Naive thymus-derived CD4-positive, alpha-beta T cell (primary cell): ENCODE measurements at regions of chr2 and their contacts with region 1.

Region 1: GRCh38 chr2:134918526-134919340 is at the start of gene CCNT2:
- DNase-seq: peak; percentile 99 to 100 (median 100)
- ATAC-seq: peak; percentile 90
- H3K4me3 ChIP-seq: peak within 1 kb of the TSS; percentile 96
- H3K4me3 Mint-ChIP-seq: peak within 1 kb of the TSS; percentile 86 to 98 (median 93)
- H3K27ac ChIP-seq: peak within 1 kb of the TSS; percentile 97
- H3K27ac Mint-ChIP-seq: peak within 1 kb of the TSS; percentile 91 to 99 (median 96)
- H3K4me1 ChIP-seq: peaks cover 31 to 45% of the 10 kb centered on the region in 2 donors
- H3K4me1 Mint-ChIP-seq: peaks cover 18 to 71% (median 48%) of the 10 kb centered on the region in 7 donors
- H3K27me3 ChIP-seq: no peaks in the 10 kb centered on the region
- H3K27me3 Mint-ChIP-seq: peaks cover 0 to 14% (median 0%) of the 10 kb centered on the region in 5 donors
- total RNA-seq, gene CCNT2: 49.8 to 78.1 (median 67.9) TPM

Region 2: GRCh38 chr2:134594399-134594798 is 324.3 kb before region 1 on chr2:
- CTCF ChIA-PET with region 1: no interaction called
- POLR2A ChIA-PET with region 1: no interaction called
- intact Hi-C with region 1: no loop called
- DNase-seq: no peak
- ATAC-seq: no peak
- H3K4me3 ChIP-seq: no peak overlapping the region
- H3K4me3 Mint-ChIP-seq: no peak overlapping the region
- H3K27ac ChIP-seq: no peak overlapping the region
- H3K27ac Mint-ChIP-seq: no peak overlapping the region
- H3K4me1 ChIP-seq: no peaks in the 10 kb centered on the region
- H3K4me1 Mint-ChIP-seq: no peaks in the 10 kb centered on the region
- H3K27me3 ChIP-seq: peaks cover 0 to 4% of the 10 kb centered on the region in 2 donors
- H3K27me3 Mint-ChIP-seq: peaks cover 0 to 8% (median 0%) of the 10 kb centered on the region in 5 donors

Region 3: DNA sequence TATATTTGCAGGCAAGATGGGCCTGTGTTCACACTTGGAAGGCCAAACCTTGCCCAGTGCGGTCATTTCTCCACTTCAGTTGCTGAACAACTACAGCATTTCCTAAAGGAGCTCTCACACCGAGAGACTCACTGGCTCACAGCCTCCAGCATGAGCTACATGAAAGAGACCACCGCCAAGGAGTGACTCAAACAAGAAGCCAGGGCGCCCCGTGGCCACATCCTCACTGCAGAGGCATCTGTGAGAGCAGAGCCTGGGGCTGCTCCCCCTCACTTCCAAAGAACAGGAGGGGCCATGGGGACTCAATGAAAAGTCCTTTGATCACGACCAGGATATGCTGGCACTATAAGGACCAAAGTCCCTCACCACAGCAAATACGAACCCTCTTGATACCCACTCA is 249.9 kb before region 1 on chr2:
- CTCF ChIA-PET with region 1: no interaction called
- POLR2A ChIA-PET with region 1: interaction called, 14 read pairs
- intact Hi-C with region 1: loop called (anchors 1 kb)
- DNase-seq: peak; percentile 53 to 92 (median 88)
- ATAC-seq: peak; percentile 85
- H3K4me3 ChIP-seq: peak overlapping the region; percentile 4
- H3K4me3 Mint-ChIP-seq: peak overlapping the region; percentile 62 to 82 (median 68)
- H3K27ac ChIP-seq: no peak overlapping the region
- H3K27ac Mint-ChIP-seq: peak overlapping the region; percentile 74 to 96 (median 89)
- H3K4me1 ChIP-seq: peaks cover 54 to 61% of the 10 kb centered on the region in 2 donors
- H3K4me1 Mint-ChIP-seq: peaks cover 60 to 87% (median 72%) of the 10 kb centered on the region in 7 donors
- H3K27me3 ChIP-seq: no peaks in the 10 kb centered on the region
- H3K27me3 Mint-ChIP-seq: peaks cover 0 to 37% (median 4%) of the 10 kb centered on the region in 5 donors

Region 4: GRCh38 chr2:134949981-134950708 is 31.4 kb after region 1 on chr2:
- CTCF ChIA-PET with region 1: no interaction called
- POLR2A ChIA-PET with region 1: interaction called, 4 read pairs
- intact Hi-C with region 1: loop called in 1 of 2 experiments (anchors 2 kb)
- DNase-seq: peak in 1 of 9 donors; percentile 2
- ATAC-seq: peak; percentile 40
- H3K4me3 ChIP-seq: no peak overlapping the region
- H3K4me3 Mint-ChIP-seq: no peak overlapping the region
- H3K27ac ChIP-seq: no peak overlapping the region
- H3K27ac Mint-ChIP-seq: peak overlapping the region; percentile 10 to 78 (median 31)
- H3K4me1 ChIP-seq: peaks cover 0 to 8% of the 10 kb centered on the region in 2 donors
- H3K4me1 Mint-ChIP-seq: peaks cover 6 to 47% (median 40%) of the 10 kb centered on the region in 7 donors
- H3K27me3 ChIP-seq: no peaks in the 10 kb centered on the region
- H3K27me3 Mint-ChIP-seq: no peaks in the 10 kb centered on the region

Region 5: GRCh38 chr2:135113322-135113721 is 194.6 kb after region 1 on chr2:
- CTCF ChIA-PET with region 1: no interaction called
- POLR2A ChIA-PET with region 1: no interaction called
- intact Hi-C with region 1: no loop called
- DNase-seq: no peak
- ATAC-seq: no peak
- H3K4me3 ChIP-seq: no peak overlapping the region
- H3K4me3 Mint-ChIP-seq: no peak overlapping the region
- H3K27ac ChIP-seq: no peak overlapping the region
- H3K27ac Mint-ChIP-seq: no peak overlapping the region
- H3K4me1 ChIP-seq: no peaks in the 10 kb centered on the region
- H3K4me1 Mint-ChIP-seq: peaks cover 0 to 20% (median 14%) of the 10 kb centered on the region in 7 donors
- H3K27me3 ChIP-seq: no peaks in the 10 kb centered on the region
- H3K27me3 Mint-ChIP-seq: no peaks in the 10 kb centered on the region

Region 6: GRCh38 chr2:135741395-135742324 is 822.9 kb after region 1 on chr2 and contains the start of gene UBXN4:
- CTCF ChIA-PET with region 1: interaction called, 5 read pairs
- POLR2A ChIA-PET with region 1: interaction called, 3 read pairs
- intact Hi-C with region 1: loop called (anchors 1 kb)
- DNase-seq: peak; percentile 73 to 93 (median 88)
- ATAC-seq: peak; percentile 95
- H3K4me3 ChIP-seq: peak within 1 kb of the TSS; percentile 88
- H3K4me3 Mint-ChIP-seq: peak within 1 kb of the TSS; percentile 92 to 98 (median 95)
- H3K27ac ChIP-seq: peak within 1 kb of the TSS; percentile 97
- H3K27ac Mint-ChIP-seq: peak within 1 kb of the TSS; percentile 89 to 99 (median 95)
- H3K4me1 ChIP-seq: peaks cover 20 to 22% of the 10 kb centered on the region in 2 donors
- H3K4me1 Mint-ChIP-seq: peaks cover 24 to 47% (median 43%) of the 10 kb centered on the region in 7 donors
- H3K27me3 ChIP-seq: no peaks in the 10 kb centered on the region
- H3K27me3 Mint-ChIP-seq: no peaks in the 10 kb centered on the region
- total RNA-seq, gene UBXN4: 115 to 158 (median 145) TPM

Region 7: GRCh38 chr2:136052369-136053362 is 1133.9 kb after region 1 on chr2:
- CTCF ChIA-PET with region 1: no interaction called
- POLR2A ChIA-PET with region 1: no interaction called
- intact Hi-C with region 1: loop called (anchors 5 to 10 kb)
- DNase-seq: no peak
- ATAC-seq: peak; percentile 15
- H3K4me3 ChIP-seq: peak overlapping the region; percentile 12
- H3K4me3 Mint-ChIP-seq: peak overlapping the region; percentile 37 to 85 (median 70)
- H3K27ac ChIP-seq: peak overlapping the region; percentile 50
- H3K27ac Mint-ChIP-seq: peak overlapping the region; percentile 62 to 96 (median 87)
- H3K4me1 ChIP-seq: peaks cover 86 to 92% of the 10 kb centered on the region in 2 donors
- H3K4me1 Mint-ChIP-seq: peaks cover 60 to 93% (median 90%) of the 10 kb centered on the region in 7 donors
- H3K27me3 ChIP-seq: no peaks in the 10 kb centered on the region
- H3K27me3 Mint-ChIP-seq: no peaks in the 10 kb centered on the region

Region 8: GRCh38 chr2:136378712-136379595 is 1460.2 kb after region 1 on chr2:
- CTCF ChIA-PET with region 1: no interaction called
- POLR2A ChIA-PET with region 1: no interaction called
- intact Hi-C with region 1: loop called in 1 of 2 experiments (anchors 5 kb)
- DNase-seq: peak; percentile 44 to 81 (median 75)
- ATAC-seq: peak; percentile 69
- H3K4me3 ChIP-seq: no peak overlapping the region
- H3K4me3 Mint-ChIP-seq: peak overlapping the region in 1 of 10 donors; percentile 12
- H3K27ac ChIP-seq: no peak overlapping the region
- H3K27ac Mint-ChIP-seq: peak overlapping the region in 6 of 9 donors; percentile 48 to 93 (median 82)
- H3K4me1 ChIP-seq: peaks cover 20 to 34% of the 10 kb centered on the region in 2 donors
- H3K4me1 Mint-ChIP-seq: peaks cover 32 to 84% (median 65%) of the 10 kb centered on the region in 7 donors
- H3K27me3 ChIP-seq: no peaks in the 10 kb centered on the region
- H3K27me3 Mint-ChIP-seq: no peaks in the 10 kb centered on the region